MCF 10A (cell line): ENCODE measurements at regions of chr3 and their contacts with region 1.

Region 1: DNA sequence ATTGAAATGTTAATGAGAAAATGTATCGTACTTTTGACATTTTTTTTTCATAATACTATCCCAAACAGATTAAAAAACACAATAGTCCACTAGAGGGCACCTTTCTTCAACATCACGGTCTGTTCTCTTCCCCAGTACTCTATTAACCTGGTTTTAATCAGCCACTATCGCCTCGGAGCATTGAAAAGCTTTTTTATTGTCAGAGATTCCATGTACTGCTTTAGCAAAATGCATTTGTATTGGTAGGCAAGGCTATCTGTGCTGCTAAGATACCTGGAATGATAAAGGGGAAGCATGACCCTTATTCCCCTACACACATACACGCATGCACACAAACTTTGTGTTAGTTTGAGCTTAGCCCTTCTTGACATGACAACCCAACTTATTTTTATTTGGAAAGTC is 160.1 kb upstream of the IL12A start:
- DNase-seq: peak; percentile 71
- H3K4me3 Mint-ChIP-seq: no peak overlapping the region
- H3K27ac Mint-ChIP-seq: peak overlapping the region; percentile 84
- H3K4me1 Mint-ChIP-seq: peaks cover 40% of the 10 kb centered on the region
- H3K27me3 Mint-ChIP-seq: no peaks in the 10 kb centered on the region
- CTCF ChIP-seq: peak; percentile 38

Region 2: DNA sequence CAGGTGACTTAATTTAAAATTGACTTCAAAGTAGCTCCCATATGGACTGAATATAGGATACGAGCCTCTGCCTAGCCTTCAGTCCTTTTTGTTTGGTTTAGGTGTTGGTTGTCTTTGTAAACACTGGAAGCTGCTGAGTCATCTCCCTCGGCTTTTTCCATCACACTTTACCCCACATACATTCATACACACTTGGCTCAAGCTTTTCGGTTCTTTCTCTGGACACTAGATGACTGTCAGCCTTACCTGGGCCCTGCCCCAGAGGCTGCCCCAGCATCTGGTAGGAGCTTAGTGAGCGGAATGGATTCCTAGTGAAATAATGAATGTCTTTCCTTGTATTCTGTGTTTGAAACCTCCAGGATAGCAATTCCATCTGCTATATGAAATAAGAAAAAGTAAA is 41.4 kb before region 1 on chr3:
- CTCF ChIA-PET with region 1: interaction called, 7 read pairs
- POLR2A ChIA-PET with region 1: interaction called, 12 read pairs
- intact Hi-C with region 1: no loop called
- DNase-seq: peak; percentile 94
- H3K4me3 Mint-ChIP-seq: peak overlapping the region; percentile 47
- H3K27ac Mint-ChIP-seq: peak overlapping the region; percentile 89
- H3K4me1 Mint-ChIP-seq: peaks cover 55% of the 10 kb centered on the region
- H3K27me3 Mint-ChIP-seq: no peaks in the 10 kb centered on the region
- CTCF ChIP-seq: no peak

Region 3: GRCh38 chr3:159813822-159814523 is 14.6 kb before region 1 on chr3:
- CTCF ChIA-PET with region 1: interaction called, 17 read pairs
- POLR2A ChIA-PET with region 1: interaction called, 7 read pairs
- intact Hi-C with region 1: no loop called
- DNase-seq: peak; percentile 74
- H3K4me3 Mint-ChIP-seq: peak overlapping the region; percentile 16
- H3K27ac Mint-ChIP-seq: peak overlapping the region; percentile 91
- H3K4me1 Mint-ChIP-seq: peaks cover 12% of the 10 kb centered on the region
- H3K27me3 Mint-ChIP-seq: no peaks in the 10 kb centered on the region
- CTCF ChIP-seq: no peak

Region 4: GRCh38 chr3:159852821-159853505 is 24.4 kb after region 1 on chr3:
- CTCF ChIA-PET with region 1: interaction called, 87 read pairs
- POLR2A ChIA-PET with region 1: interaction called, 181 read pairs
- intact Hi-C with region 1: loop called (anchors 2 kb)
- DNase-seq: peak; percentile 57
- H3K4me3 Mint-ChIP-seq: peak overlapping the region; percentile 66
- H3K27ac Mint-ChIP-seq: peak overlapping the region; percentile 92
- H3K4me1 Mint-ChIP-seq: peaks cover 38% of the 10 kb centered on the region
- H3K27me3 Mint-ChIP-seq: no peaks in the 10 kb centered on the region
- CTCF ChIP-seq: no peak

Region 5: DNA sequence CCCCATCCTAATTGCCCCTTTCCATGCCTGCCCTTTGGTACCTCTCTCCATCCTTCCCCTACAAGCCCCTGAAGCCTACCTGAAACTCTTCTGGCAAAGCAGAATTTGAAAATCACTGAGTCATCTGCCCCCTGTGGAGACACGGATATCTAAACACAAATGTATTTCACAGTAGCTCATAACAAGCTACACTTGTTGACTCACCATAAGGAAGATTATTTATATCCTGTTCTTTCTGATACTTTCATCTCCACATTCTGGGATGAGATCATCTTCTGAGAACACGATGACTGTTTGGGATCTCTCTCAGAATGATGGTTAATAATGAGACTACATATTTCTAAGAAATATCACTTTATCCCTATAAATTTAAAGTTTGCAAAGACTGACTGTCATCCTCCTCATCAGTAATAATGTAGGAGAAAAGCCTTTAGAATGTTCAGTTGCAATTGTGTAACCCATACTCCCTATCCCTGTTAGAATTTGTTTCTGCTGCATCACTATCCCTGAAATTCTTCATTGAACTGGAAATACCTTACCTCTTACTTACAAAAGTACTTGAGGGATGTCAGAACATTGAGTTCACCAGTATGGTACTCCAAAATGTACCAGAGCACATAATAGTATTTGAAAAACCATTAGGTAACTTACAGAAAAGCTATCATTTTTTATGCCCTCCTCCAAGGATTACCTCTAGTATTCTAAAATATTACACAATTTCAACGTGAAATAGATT is 44.0 kb after region 1 on chr3:
- CTCF ChIA-PET with region 1: interaction called, 48 read pairs
- POLR2A ChIA-PET with region 1: interaction called, 101 read pairs
- intact Hi-C with region 1: loop called (anchors 2 kb)
- DNase-seq: peak; percentile 89
- H3K4me3 Mint-ChIP-seq: no peak overlapping the region
- H3K27ac Mint-ChIP-seq: peak overlapping the region; percentile 84
- H3K4me1 Mint-ChIP-seq: peaks cover 22% of the 10 kb centered on the region
- H3K27me3 Mint-ChIP-seq: no peaks in the 10 kb centered on the region
- CTCF ChIP-seq: peak; percentile 12

Region 6: GRCh38 chr3:159897331-159898075 is 69.0 kb after region 1 on chr3:
- CTCF ChIA-PET with region 1: interaction called, 14 read pairs
- POLR2A ChIA-PET with region 1: no interaction called
- intact Hi-C with region 1: no loop called
- DNase-seq: peak; percentile 21
- H3K4me3 Mint-ChIP-seq: no peak overlapping the region
- H3K27ac Mint-ChIP-seq: peak overlapping the region; percentile 12
- H3K4me1 Mint-ChIP-seq: peaks cover 6% of the 10 kb centered on the region
- H3K27me3 Mint-ChIP-seq: no peaks in the 10 kb centered on the region
- CTCF ChIP-seq: no peak

Region 7: DNA sequence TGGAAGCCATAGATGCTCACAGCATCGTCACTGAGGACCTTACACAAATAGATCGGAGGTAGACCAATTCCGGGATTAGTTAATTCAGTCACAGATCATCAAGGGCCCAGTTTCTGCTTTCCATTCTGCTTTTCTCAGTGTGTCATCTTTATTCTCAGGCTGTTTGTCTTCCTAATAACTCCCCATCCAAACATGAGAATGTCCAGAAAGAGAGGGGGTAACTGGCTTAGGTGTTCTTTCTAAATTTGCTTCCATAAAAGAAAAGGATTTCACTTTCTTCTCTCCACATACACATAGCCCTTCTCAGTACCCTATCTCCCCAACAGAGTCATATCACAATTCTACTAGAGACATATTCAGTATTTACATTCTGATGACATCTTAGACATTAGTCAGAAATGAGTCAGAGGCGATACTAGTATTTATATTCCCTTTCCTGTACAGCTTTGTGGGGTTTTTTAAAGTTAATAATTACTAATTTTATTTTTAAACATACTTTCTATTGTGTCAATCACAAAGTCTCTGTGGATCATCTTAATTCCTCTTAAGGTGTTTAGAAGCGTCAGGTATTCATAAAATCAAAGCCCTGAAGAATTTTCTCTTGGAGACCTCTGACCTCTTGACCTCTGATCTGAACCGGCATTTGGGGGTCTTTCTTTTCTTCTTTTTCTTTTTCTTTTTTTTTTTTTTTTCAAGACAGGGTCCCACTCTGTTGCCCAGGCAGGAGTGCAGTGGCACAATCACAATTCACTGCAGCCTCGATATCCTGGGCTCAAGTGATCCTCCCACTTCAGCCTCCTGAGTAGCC is 135.8 kb after region 1 on chr3:
- CTCF ChIA-PET with region 1: no interaction called
- POLR2A ChIA-PET with region 1: no interaction called
- intact Hi-C with region 1: no loop called
- DNase-seq: peak; percentile 55
- H3K4me3 Mint-ChIP-seq: no peak overlapping the region
- H3K27ac Mint-ChIP-seq: no peak overlapping the region
- H3K4me1 Mint-ChIP-seq: no peaks in the 10 kb centered on the region
- H3K27me3 Mint-ChIP-seq: no peaks in the 10 kb centered on the region
- CTCF ChIP-seq: no peak

Region 8: DNA sequence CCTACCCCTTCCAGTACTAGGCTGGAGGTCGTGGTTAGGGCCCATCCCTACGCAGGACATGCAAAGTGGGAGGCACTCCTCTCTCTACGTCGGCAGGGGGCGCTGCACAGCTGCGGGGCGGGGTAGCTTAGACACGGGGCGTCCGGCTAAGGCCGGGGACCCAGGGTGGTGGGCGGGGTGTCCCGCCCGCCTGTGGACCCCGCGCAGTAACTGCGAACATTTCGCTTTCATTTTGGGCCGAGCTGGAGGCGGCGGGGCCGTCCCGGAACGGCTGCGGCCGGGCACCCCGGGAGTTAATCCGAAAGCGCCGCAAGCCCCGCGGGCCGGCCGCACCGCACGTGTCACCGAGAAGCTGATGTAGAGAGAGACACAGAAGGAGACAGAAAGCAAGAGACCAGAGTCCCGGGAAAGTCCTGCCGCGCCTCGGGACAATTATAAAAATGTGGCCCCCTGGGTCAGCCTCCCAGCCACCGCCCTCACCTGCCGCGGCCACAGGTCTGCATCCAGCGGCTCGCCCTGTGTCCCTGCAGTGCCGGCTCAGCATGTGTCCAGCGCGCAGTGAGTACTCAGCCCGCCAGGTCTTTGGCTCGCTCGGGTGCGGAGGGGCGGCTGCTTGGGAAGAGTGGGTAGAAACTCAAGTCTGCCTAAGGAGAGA is 160.2 kb after region 1 on chr3 and contains the start of gene IL12A:
- CTCF ChIA-PET with region 1: interaction called, 20 read pairs
- POLR2A ChIA-PET with region 1: no interaction called
- intact Hi-C with region 1: loop called (anchors 5 kb)
- DNase-seq: peak; percentile 78
- H3K4me3 Mint-ChIP-seq: peak within 1 kb of the TSS; percentile 75
- H3K27ac Mint-ChIP-seq: peak within 1 kb of the TSS; percentile 18
- H3K4me1 Mint-ChIP-seq: peaks cover 27% of the 10 kb centered on the region
- H3K27me3 Mint-ChIP-seq: no peaks in the 10 kb centered on the region
- CTCF ChIP-seq: peak; percentile 92
- total RNA-seq, gene IL12A: 1.3 and 1.7 TPM in 2 replicates